Naive thymus-derived CD4-positive, alpha-beta T cell (primary cell): ENCODE measurements at regions of chr22 and their contacts with region 1.

Region 1: DNA sequence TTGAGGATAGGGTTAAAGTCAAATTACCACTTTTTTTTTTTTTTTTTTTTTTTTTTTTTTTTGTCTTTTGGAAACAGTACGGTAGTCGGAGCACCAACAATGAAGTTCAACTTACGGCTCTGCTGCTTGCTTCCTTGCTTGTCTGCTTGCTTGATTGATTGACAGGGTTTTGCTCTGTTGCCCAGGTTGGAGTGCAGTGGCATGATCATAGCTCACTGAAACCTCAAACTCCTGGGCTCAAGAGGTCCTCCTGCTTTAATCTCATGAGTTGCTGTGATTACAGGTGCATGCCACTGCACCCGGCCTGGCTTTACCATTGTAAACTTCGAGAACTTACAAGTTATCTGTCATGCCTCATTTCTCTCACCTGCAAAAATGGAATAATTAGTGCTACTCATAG is 5.8 kb downstream of the SGSM3 start:
- DNase-seq: no peak
- ATAC-seq: no peak
- H3K4me3 ChIP-seq: no peak overlapping the region
- H3K4me3 Mint-ChIP-seq: peak overlapping the region in 2 of 10 donors; percentile 4 to 58
- H3K27ac ChIP-seq: no peak overlapping the region
- H3K27ac Mint-ChIP-seq: peak overlapping the region in 2 of 9 donors; percentile 32 to 59
- H3K4me1 ChIP-seq: peaks cover 2 to 18% of the 10 kb centered on the region in 2 donors
- H3K4me1 Mint-ChIP-seq: peaks cover 28 to 73% (median 49%) of the 10 kb centered on the region in 7 donors
- H3K27me3 ChIP-seq: no peaks in the 10 kb centered on the region
- H3K27me3 Mint-ChIP-seq: no peaks in the 10 kb centered on the region

Region 2: GRCh38 chr22:40487663-40488249 is 111.6 kb after region 1 on chr22:
- CTCF ChIA-PET with region 1: interaction called, 3 read pairs
- POLR2A ChIA-PET with region 1: no interaction called
- intact Hi-C with region 1: loop called in 1 of 2 experiments (anchors 5 kb)
- DNase-seq: peak in 7 of 9 donors; percentile 14 to 51 (median 34)
- ATAC-seq: peak; percentile 71
- H3K4me3 ChIP-seq: no peak overlapping the region
- H3K4me3 Mint-ChIP-seq: no peak overlapping the region
- H3K27ac ChIP-seq: no peak overlapping the region
- H3K27ac Mint-ChIP-seq: peak overlapping the region in 6 of 9 donors; percentile 0 to 29 (median 10)
- H3K4me1 ChIP-seq: peaks cover 0 to 32% of the 10 kb centered on the region in 2 donors
- H3K4me1 Mint-ChIP-seq: peaks cover 30 to 62% (median 52%) of the 10 kb centered on the region in 7 donors
- H3K27me3 ChIP-seq: no peaks in the 10 kb centered on the region
- H3K27me3 Mint-ChIP-seq: no peaks in the 10 kb centered on the region